ENCODE measurements at regions of chr14 and their contacts with region 1.

Region 1: DNA sequence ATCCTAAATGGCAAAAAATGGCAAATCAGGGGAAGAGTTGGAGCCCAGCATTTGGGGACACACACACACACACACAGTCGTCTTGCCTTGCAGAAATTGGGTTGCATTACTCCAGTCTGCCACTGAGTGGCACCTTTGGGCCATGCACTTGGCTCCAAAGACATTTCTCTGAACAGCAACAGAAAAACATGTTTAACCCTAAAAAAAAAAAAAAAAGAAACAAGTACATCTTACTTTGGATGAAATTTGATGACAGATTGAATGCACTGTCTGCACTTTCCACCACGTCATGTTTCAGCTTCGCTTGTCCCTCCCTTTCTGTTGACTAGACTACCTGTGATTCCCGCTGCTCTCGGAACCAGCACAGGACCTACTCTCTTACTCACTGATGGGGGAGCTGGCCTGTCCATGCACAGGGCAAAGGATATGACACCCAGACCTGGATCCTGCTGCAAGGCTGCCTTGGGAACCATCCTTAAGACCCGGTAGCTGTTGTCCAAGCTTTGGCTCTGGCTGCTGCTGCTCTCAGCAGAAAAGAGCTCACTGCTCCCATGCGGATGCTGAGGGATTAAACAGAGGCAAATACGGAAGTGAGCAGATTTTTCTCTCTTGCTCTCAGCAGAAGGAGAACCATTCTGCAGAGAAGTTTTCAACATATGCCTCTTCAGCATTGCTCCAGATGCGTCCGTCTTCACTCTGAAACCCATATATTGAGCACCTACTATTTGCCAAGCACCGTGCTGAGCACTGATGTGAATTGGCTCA is 376.8 kb downstream of the DPF3 start:
- DNase-seq: peak; percentile 67 to 79
- H3K4me3 ChIP-seq: no peak overlapping the region
- H3K27ac ChIP-seq: no peak overlapping the region
- H3K4me1 ChIP-seq: peaks cover 0 to 7% (median 5%) of the 10 kb centered on the region in 4 donors
- H3K27me3 ChIP-seq: no peaks in the 10 kb centered on the region
- CTCF ChIP-seq: peak; percentile 86 to 93

Region 2: GRCh38 chr14:72904840-72905561 is 387.9 kb after region 1 on chr14:
- intact Hi-C with region 1: loop called (anchors 2 kb)
- DNase-seq: peak; percentile 64 to 80
- H3K4me3 ChIP-seq: no peak overlapping the region
- H3K27ac ChIP-seq: no peak overlapping the region
- H3K4me1 ChIP-seq: peaks cover 0 to 47% (median 34%) of the 10 kb centered on the region in 4 donors
- H3K27me3 ChIP-seq: no peaks in the 10 kb centered on the region
- CTCF ChIP-seq: peak; percentile 96 to 98

Region 3: GRCh38 chr14:72948481-72949138 is 431.5 kb after region 1 on chr14:
- intact Hi-C with region 1: loop called (anchors 2 kb)
- DNase-seq: peak; percentile 63 to 79
- H3K4me3 ChIP-seq: no peak overlapping the region
- H3K27ac ChIP-seq: no peak overlapping the region
- H3K4me1 ChIP-seq: no peaks in the 10 kb centered on the region
- H3K27me3 ChIP-seq: no peaks in the 10 kb centered on the region
- CTCF ChIP-seq: peak; percentile 76 to 89

Region 4: GRCh38 chr14:73049428-73049827 is 532.3 kb after region 1 on chr14:
- intact Hi-C with region 1: no loop called
- DNase-seq: no peak
- H3K4me3 ChIP-seq: no peak overlapping the region
- H3K27ac ChIP-seq: no peak overlapping the region
- H3K4me1 ChIP-seq: no peaks in the 10 kb centered on the region
- H3K27me3 ChIP-seq: no peaks in the 10 kb centered on the region
- CTCF ChIP-seq: no peak

Measured in tibial artery (tissue), 4 donors.